Left ventricle myocardium inferior (tissue), 1 donor: ENCODE measurements at regions of chr2 and their contacts with region 1.

Region 1: DNA sequence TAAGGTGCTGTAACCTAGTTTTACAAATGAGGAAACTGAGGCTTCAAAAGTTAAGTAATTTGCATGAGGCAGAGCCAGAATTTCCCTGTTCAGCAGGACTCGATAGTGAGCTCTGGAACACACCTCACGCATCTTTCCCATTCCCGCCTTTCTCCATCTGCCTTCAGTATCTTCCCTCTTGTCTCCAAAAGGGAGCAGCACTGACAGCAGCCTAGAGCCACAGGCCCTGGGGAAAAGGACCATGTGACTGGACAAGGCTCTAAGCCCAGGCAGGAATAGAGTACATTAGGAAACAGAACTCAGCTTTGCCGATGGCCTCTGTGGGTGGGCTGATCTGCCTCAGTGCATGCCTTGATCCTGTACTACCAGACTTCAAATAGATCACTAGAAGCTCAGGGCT is 21.5 kb downstream of the GPR155 start:
- DNase-seq: no peak
- H3K4me3 ChIP-seq: no peak overlapping the region
- H3K27ac ChIP-seq: no peak overlapping the region
- H3K4me1 ChIP-seq: no peaks in the 10 kb centered on the region
- H3K27me3 ChIP-seq: no peaks in the 10 kb centered on the region
- CTCF ChIP-seq: no peak

Region 2: GRCh38 chr2:174522553-174522952 is 57.2 kb after region 1 on chr2:
- intact Hi-C with region 1: loop called (anchors 10 kb)
- DNase-seq: no peak
- H3K4me3 ChIP-seq: no peak overlapping the region
- H3K27ac ChIP-seq: no peak overlapping the region
- H3K4me1 ChIP-seq: no peaks in the 10 kb centered on the region
- H3K27me3 ChIP-seq: peaks cover 20% of the 10 kb centered on the region
- CTCF ChIP-seq: peak; percentile 43

Region 3: GRCh38 chr2:174603280-174603679 is 138.0 kb after region 1 on chr2:
- intact Hi-C with region 1: loop called (anchors 5 kb)
- DNase-seq: no peak
- H3K4me3 ChIP-seq: no peak overlapping the region
- H3K27ac ChIP-seq: no peak overlapping the region
- H3K4me1 ChIP-seq: peaks cover 30% of the 10 kb centered on the region
- H3K27me3 ChIP-seq: no peaks in the 10 kb centered on the region
- CTCF ChIP-seq: peak; percentile 76

Region 4: GRCh38 chr2:174682578-174683391 is 217.5 kb after region 1 on chr2:
- intact Hi-C with region 1: loop called (anchors 10 kb)
- DNase-seq: peak; percentile 79
- H3K4me3 ChIP-seq: peak overlapping the region; percentile 86
- H3K27ac ChIP-seq: peak overlapping the region; percentile 90
- H3K4me1 ChIP-seq: peaks cover 58% of the 10 kb centered on the region
- H3K27me3 ChIP-seq: no peaks in the 10 kb centered on the region
- CTCF ChIP-seq: no peak